MCF 10A (cell line): ENCODE measurements at regions of chr11 and their contacts with region 1.

Region 1: GRCh38 chr11:128884703-128885338 is 6.3 kb upstream of the KCNJ5 start:
- DNase-seq: peak; percentile 79
- H3K4me3 Mint-ChIP-seq: no peak overlapping the region
- H3K27ac Mint-ChIP-seq: no peak overlapping the region
- H3K4me1 Mint-ChIP-seq: peaks cover 15% of the 10 kb centered on the region
- H3K27me3 Mint-ChIP-seq: peaks cover 19% of the 10 kb centered on the region
- CTCF ChIP-seq: peak; percentile 87

Region 2: DNA sequence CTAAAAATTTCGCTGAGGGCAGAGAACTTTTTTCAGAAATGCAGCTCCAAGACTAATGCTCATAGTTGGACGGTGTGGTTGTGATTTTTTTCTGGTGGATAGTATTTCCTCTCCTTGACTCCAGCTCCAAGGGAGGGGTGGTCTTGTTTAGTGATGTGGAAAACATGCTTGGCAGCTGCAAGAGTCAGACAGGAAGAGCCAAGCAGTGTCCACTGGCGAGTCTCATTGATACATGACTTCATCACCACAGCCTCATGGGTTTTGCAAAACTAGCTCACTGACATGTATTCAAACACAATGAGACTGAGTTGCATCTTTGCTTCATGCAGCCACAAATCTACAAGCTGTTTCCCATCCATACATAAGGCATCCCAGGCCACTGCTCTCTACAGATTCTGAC is 10.4 kb before region 1 on chr11:
- CTCF ChIA-PET with region 1: interaction called, 21 read pairs
- POLR2A ChIA-PET with region 1: no interaction called
- intact Hi-C with region 1: no loop called
- DNase-seq: no peak
- H3K4me3 Mint-ChIP-seq: no peak overlapping the region
- H3K27ac Mint-ChIP-seq: no peak overlapping the region
- H3K4me1 Mint-ChIP-seq: no peaks in the 10 kb centered on the region
- H3K27me3 Mint-ChIP-seq: peaks cover 12% of the 10 kb centered on the region
- CTCF ChIP-seq: no peak

Region 3: GRCh38 chr11:128928400-128928799 is 43.6 kb after region 1 on chr11:
- CTCF ChIA-PET with region 1: interaction called, 13 read pairs
- POLR2A ChIA-PET with region 1: no interaction called
- intact Hi-C with region 1: no loop called
- DNase-seq: no peak
- H3K4me3 Mint-ChIP-seq: no peak overlapping the region
- H3K27ac Mint-ChIP-seq: no peak overlapping the region
- H3K4me1 Mint-ChIP-seq: no peaks in the 10 kb centered on the region
- H3K27me3 Mint-ChIP-seq: no peaks in the 10 kb centered on the region
- CTCF ChIP-seq: no peak

Region 4: DNA sequence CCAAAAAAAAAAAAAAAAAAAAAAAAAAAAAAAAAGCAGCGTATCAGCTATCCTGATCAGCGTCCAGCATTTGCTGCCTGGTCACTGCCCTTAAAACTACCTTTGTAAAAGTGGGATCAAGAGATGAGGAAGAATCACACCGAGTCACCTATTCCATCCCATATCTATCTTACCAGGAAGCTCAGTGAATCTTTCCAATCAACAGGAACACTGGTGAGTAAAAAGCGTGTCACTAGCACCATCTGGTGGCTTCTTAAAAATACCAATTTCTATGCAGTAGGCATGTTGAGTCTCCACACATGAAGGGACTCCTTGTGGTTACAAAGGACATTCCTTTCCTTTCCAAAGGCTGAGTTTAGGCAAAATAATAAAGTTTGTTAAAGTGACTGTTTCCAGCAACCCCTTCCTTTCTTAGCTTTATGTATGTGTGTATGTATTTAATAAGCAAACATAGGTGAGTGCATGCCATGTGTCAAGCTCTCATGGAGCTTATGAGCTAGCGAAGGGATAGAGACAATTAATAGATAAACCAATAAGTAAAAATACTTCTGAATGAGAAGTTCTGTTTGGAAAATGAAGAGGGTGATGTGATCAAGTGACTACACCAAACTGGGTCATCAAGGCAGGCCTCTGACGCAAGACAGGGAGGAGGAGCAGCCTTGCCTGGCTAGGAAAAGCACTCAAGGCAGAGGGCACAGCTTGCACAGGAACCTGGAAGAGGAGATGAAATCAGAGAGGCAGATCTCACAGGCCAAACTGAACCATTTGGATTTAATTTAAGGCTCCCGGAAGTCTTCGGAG is 71.8 kb after region 1 on chr11:
- CTCF ChIA-PET with region 1: interaction called, 598 read pairs
- POLR2A ChIA-PET with region 1: interaction called, 18 read pairs
- intact Hi-C with region 1: loop called (anchors 1 kb)
- DNase-seq: peak; percentile 81
- H3K4me3 Mint-ChIP-seq: no peak overlapping the region
- H3K27ac Mint-ChIP-seq: no peak overlapping the region
- H3K4me1 Mint-ChIP-seq: peaks cover 7% of the 10 kb centered on the region
- H3K27me3 Mint-ChIP-seq: no peaks in the 10 kb centered on the region
- CTCF ChIP-seq: peak; percentile 73

Region 5: GRCh38 chr11:129013737-129014475 is 129.1 kb after region 1 on chr11:
- CTCF ChIA-PET with region 1: no interaction called
- POLR2A ChIA-PET with region 1: no interaction called
- intact Hi-C with region 1: no loop called
- DNase-seq: no peak
- H3K4me3 Mint-ChIP-seq: no peak overlapping the region
- H3K27ac Mint-ChIP-seq: no peak overlapping the region
- H3K4me1 Mint-ChIP-seq: no peaks in the 10 kb centered on the region
- H3K27me3 Mint-ChIP-seq: no peaks in the 10 kb centered on the region
- CTCF ChIP-seq: no peak

Region 6: GRCh38 chr11:129117595-129118350 is 233.0 kb after region 1 on chr11:
- CTCF ChIA-PET with region 1: interaction called, 3 read pairs
- POLR2A ChIA-PET with region 1: no interaction called
- intact Hi-C with region 1: loop called (anchors 1 kb)
- DNase-seq: peak; percentile 79
- H3K4me3 Mint-ChIP-seq: no peak overlapping the region
- H3K27ac Mint-ChIP-seq: no peak overlapping the region
- H3K4me1 Mint-ChIP-seq: peaks cover 33% of the 10 kb centered on the region
- H3K27me3 Mint-ChIP-seq: no peaks in the 10 kb centered on the region
- CTCF ChIP-seq: peak; percentile 84

Region 7: GRCh38 chr11:129364143-129364654 is 479.4 kb after region 1 on chr11:
- CTCF ChIA-PET with region 1: interaction called, 3 read pairs
- POLR2A ChIA-PET with region 1: no interaction called
- intact Hi-C with region 1: loop called (anchors 10 kb)
- DNase-seq: peak; percentile 89
- H3K4me3 Mint-ChIP-seq: no peak overlapping the region
- H3K27ac Mint-ChIP-seq: no peak overlapping the region
- H3K4me1 Mint-ChIP-seq: peaks cover 6% of the 10 kb centered on the region
- H3K27me3 Mint-ChIP-seq: peaks cover 61% of the 10 kb centered on the region
- CTCF ChIP-seq: peak; percentile 100